Activated CD4-positive, alpha-beta memory T cell treated with anti-CD3 and anti-CD28 coated beads, Interleukin-2, amount 10 ng/mL, durations not matched to agents 7 days and 5 days (primary cell): ENCODE measurements at regions of chr12 and their contacts with region 1.

Region 1: DNA sequence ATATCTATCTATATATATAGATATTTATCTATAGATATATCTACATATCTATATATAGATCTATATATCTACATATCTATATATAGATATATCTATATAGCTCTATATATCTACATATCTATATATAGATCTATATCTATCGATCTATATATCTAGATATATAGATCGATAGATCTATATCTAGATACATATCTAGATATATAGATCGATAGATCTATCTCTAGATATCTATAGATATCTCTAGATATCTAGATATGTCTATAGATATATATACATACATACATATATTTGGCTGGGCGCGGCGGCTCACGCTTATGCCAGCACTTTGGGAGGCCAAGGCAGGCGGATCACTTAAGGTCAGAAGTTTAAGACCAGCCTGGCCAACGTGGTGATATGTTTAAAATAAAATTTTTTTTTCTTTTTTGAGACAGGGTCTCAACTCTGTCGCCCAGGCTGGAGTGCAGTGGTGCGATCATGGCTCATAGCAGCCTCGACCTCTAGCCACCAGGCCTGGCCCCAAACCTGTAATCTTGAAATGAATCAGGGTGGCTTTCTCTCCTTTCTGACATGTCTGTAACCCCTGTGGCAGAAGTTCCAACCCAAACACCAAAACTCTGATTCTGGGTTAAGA is 18.1 kb downstream of the ARPC3 start:
- DNase-seq: no peak
- H3K4me3 Mint-ChIP-seq: no peak overlapping the region
- H3K27ac Mint-ChIP-seq: peak overlapping the region; percentile 31
- H3K4me1 Mint-ChIP-seq: peaks cover 6% of the 10 kb centered on the region
- H3K27me3 Mint-ChIP-seq: no peaks in the 10 kb centered on the region

Region 2: GRCh38 chr12:110289044-110289710 is 142.9 kb before region 1 on chr12:
- CTCF ChIA-PET with region 1: interaction called, 20 read pairs
- POLR2A ChIA-PET with region 1: interaction called, 3 read pairs
- DNase-seq: peak; percentile 4
- H3K4me3 Mint-ChIP-seq: no peak overlapping the region
- H3K27ac Mint-ChIP-seq: peak overlapping the region; percentile 29
- H3K4me1 Mint-ChIP-seq: peaks cover 60% of the 10 kb centered on the region
- H3K27me3 Mint-ChIP-seq: no peaks in the 10 kb centered on the region

Region 3: GRCh38 chr12:110379197-110379596 is 52.9 kb before region 1 on chr12:
- CTCF ChIA-PET with region 1: interaction called, 19 read pairs
- POLR2A ChIA-PET with region 1: no interaction called
- DNase-seq: no peak
- H3K4me3 Mint-ChIP-seq: no peak overlapping the region
- H3K27ac Mint-ChIP-seq: no peak overlapping the region
- H3K4me1 Mint-ChIP-seq: peaks cover 14% of the 10 kb centered on the region
- H3K27me3 Mint-ChIP-seq: no peaks in the 10 kb centered on the region

Region 4: DNA sequence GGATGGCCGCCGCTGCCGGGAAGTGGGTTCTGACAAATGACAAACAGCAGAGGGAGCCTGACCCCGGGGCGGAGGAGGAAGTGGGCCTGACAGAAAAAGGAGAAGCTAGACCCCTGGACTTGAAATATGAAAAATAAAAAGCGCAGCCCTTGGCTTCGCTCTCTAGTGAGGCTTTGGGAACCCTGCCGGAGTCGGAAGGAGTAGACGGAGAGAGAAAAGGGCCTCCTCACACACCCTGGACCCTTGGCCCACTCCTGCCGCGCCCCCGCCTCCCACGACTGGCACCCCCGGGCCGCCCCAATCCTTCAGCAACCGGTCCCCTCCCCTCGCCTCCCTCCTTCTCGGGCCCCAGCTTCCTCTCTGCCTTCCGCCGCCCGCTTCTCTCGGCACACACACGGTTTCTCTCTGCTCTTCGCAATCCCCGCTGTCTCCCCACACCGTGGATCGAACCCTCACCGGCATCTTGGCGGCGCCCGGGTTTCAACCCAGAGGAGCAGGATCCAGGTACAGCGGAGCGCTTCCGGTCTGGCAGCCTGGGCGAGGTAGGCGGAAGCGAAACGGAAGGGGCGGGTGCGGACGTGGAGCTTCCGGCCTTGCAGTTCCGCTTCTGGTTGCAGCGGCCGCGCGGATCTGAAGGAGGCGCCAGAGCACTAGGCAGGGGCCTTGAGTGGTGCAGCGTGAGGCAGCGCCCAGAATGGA is 17.9 kb after region 1 on chr12 and contains the start of gene ARPC3:
- CTCF ChIA-PET with region 1: interaction called, 112 read pairs
- POLR2A ChIA-PET with region 1: interaction called, 32 read pairs
- DNase-seq: peak; percentile 97
- H3K4me3 Mint-ChIP-seq: peak within 1 kb of the TSS; percentile 99
- H3K27ac Mint-ChIP-seq: peak within 1 kb of the TSS; percentile 100
- H3K4me1 Mint-ChIP-seq: peaks cover 46% of the 10 kb centered on the region
- H3K27me3 Mint-ChIP-seq: no peaks in the 10 kb centered on the region
- total RNA-seq, gene ARPC3: 460 to 466 TPM

Region 5: GRCh38 chr12:110577717-110578521 is 145.8 kb after region 1 on chr12:
- CTCF ChIA-PET with region 1: interaction called, 13 read pairs
- POLR2A ChIA-PET with region 1: no interaction called
- DNase-seq: peak; percentile 54
- H3K4me3 Mint-ChIP-seq: peak overlapping the region; percentile 67
- H3K27ac Mint-ChIP-seq: peak overlapping the region; percentile 98
- H3K4me1 Mint-ChIP-seq: peaks cover 66% of the 10 kb centered on the region
- H3K27me3 Mint-ChIP-seq: no peaks in the 10 kb centered on the region